GM12878 (cell line): ENCODE measurements at regions of chr1 and their contacts with region 1.

Region 1: DNA sequence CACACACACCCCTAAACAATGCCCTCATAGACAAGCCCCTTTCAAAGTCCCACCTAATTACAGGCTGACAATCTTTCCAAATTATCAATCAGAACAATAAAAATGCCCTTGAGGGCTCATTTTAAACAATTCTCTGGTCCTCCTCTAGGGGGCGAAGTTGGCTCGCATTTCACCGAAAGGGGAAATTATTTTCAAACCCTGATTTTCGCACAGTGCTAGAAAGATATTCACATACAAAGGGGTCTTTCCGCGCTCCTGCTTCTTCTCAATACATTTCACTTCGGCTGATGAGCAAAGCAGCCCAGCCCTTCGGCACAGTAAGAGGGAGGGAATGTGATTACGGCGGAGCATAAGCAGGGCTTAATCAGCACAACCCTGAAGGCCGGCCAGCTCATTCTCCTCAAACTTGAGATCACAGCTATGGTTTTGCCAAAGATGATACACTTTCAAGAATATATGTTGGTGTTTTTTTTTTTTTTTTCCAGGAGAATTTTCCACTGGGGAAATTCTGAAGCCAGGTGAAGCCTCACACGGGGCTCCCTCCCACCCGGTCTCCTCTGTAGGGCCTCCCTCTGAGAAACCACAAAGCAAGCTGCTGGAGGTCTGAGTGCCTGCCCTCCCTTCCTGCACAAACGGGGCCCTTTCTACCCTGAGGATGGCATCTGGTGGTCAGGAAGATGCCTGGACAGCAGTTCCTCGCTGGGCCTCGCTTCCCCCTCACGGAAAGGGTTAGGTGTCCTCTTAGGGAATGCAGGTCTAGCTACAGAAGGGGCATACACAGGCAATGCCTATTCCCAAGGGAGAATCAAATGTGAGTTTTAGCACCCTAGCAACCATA is 66.9 kb downstream of the GNG12 start:
- DNase-seq: no peak
- ATAC-seq: peak; percentile 69
- H3K4me3 ChIP-seq: no peak overlapping the region
- H3K27ac ChIP-seq: no peak overlapping the region
- H3K4me1 ChIP-seq: peaks cover 7% of the 10 kb centered on the region
- H3K27me3 ChIP-seq: peaks cover 0 to 3% of the 10 kb centered on the region in 2 experiments; a peak in 2 of 4 replicates
- CTCF ChIP-seq: peak; percentile 65 to 76 (median 76)
- EP300 ChIP-seq: no peak
- POLR2A ChIP-seq: no peak
- RAD21 ChIP-seq: peak; percentile 85

Region 2: DNA sequence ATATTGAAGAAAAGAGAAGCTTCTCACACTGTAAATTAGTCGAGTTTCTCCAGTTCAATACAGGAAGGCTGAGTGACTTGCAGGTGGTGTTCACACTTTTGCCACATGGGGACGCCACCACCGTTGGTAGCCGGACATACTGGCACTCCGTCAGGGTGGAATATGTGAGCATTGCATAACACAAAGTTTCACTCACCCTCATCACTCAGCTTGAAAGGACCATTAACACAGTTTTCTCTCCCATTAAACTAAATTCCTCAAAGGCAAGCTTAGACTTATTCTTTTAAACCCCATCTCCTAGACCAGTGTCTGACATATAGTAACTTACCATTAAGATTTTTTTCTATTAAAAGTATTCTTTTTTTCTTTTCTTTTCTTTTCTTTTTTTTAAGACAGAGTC is 230.9 kb before region 1 on chr1:
- CTCF ChIA-PET with region 1: interaction called, 213 read pairs
- POLR2A ChIA-PET with region 1: no interaction called
- RAD21 ChIA-PET with region 1: interaction called, 119 read pairs
- SMC1A ChIA-PET with region 1: interaction called, 138 read pairs
- in situ Hi-C with region 1: no loop called
- intact Hi-C with region 1: no loop called
- DNase-seq: peak; percentile 9
- ATAC-seq: peak; percentile 90
- H3K4me3 ChIP-seq: no peak overlapping the region
- H3K27ac ChIP-seq: no peak overlapping the region
- H3K4me1 ChIP-seq: no peaks in the 10 kb centered on the region
- H3K27me3 ChIP-seq: no peaks in the 10 kb centered on the region
- CTCF ChIP-seq: peak; percentile 66 to 77 (median 75)
- EP300 ChIP-seq: no peak
- POLR2A ChIP-seq: no peak
- RAD21 ChIP-seq: peak; percentile 65

Region 3: GRCh38 chr1:67685067-67685557 is 81.2 kb before region 1 on chr1 and contains the start of gene GADD45A:
- CTCF ChIA-PET with region 1: interaction called, 107 read pairs
- POLR2A ChIA-PET with region 1: interaction called, 33 read pairs
- RAD21 ChIA-PET with region 1: interaction called, 225 read pairs
- SMC1A ChIA-PET with region 1: interaction called, 197 read pairs
- in situ Hi-C with region 1: no loop called
- intact Hi-C with region 1: no loop called
- DNase-seq: peak; percentile 97
- ATAC-seq: peak; percentile 88
- H3K4me3 ChIP-seq: peak within 1 kb of the TSS; percentile 81
- H3K27ac ChIP-seq: peak within 1 kb of the TSS; percentile 83
- H3K4me1 ChIP-seq: peaks cover 8% of the 10 kb centered on the region
- H3K27me3 ChIP-seq: peaks cover 0 to 2% of the 10 kb centered on the region in 2 experiments; a peak in 2 of 4 replicates
- CTCF ChIP-seq: no peak
- EP300 ChIP-seq: 0 out of 4 replicates have a peak, but pooled peaks of 1 of the 2 experiments have one; percentile 36
- POLR2A ChIP-seq: peak; percentile 100
- RAD21 ChIP-seq: no peak
- polyA plus RNA-seq, gene GADD45A: 4.7 to 9.3 TPM

Region 4: GRCh38 chr1:67785847-67786753 is 19.7 kb after region 1 on chr1:
- CTCF ChIA-PET with region 1: interaction called, 36 read pairs
- POLR2A ChIA-PET with region 1: interaction called, 15 read pairs
- RAD21 ChIA-PET with region 1: interaction called, 73 read pairs
- SMC1A ChIA-PET with region 1: interaction called, 232 read pairs
- in situ Hi-C with region 1: no loop called
- intact Hi-C with region 1: no loop called
- DNase-seq: no peak
- ATAC-seq: peak; percentile 14; the same call in 2 of the 3 replicates
- H3K4me3 ChIP-seq: no peak overlapping the region
- H3K27ac ChIP-seq: no peak overlapping the region
- H3K4me1 ChIP-seq: no peaks in the 10 kb centered on the region
- H3K27me3 ChIP-seq: no peaks in the 10 kb centered on the region
- CTCF ChIP-seq: no peak
- EP300 ChIP-seq: no peak
- POLR2A ChIP-seq: no peak
- RAD21 ChIP-seq: no peak

Region 5: GRCh38 chr1:67814121-67814772 is 47.9 kb after region 1 on chr1:
- CTCF ChIA-PET with region 1: interaction called, 104 read pairs
- POLR2A ChIA-PET with region 1: interaction called, 35 read pairs
- RAD21 ChIA-PET with region 1: interaction called, 232 read pairs
- SMC1A ChIA-PET with region 1: interaction called, 1,058 read pairs
- in situ Hi-C with region 1: no loop called
- intact Hi-C with region 1: no loop called
- DNase-seq: no peak
- ATAC-seq: no peak
- H3K4me3 ChIP-seq: no peak overlapping the region
- H3K27ac ChIP-seq: no peak overlapping the region
- H3K4me1 ChIP-seq: no peaks in the 10 kb centered on the region
- H3K27me3 ChIP-seq: no peaks in the 10 kb centered on the region
- CTCF ChIP-seq: no peak
- EP300 ChIP-seq: no peak
- POLR2A ChIP-seq: no peak
- RAD21 ChIP-seq: no peak

Region 6: GRCh38 chr1:67853704-67854103 is 87.3 kb after region 1 on chr1:
- CTCF ChIA-PET with region 1: interaction called, 315 read pairs
- POLR2A ChIA-PET with region 1: interaction called, 3 read pairs
- RAD21 ChIA-PET with region 1: interaction called, 175 read pairs
- SMC1A ChIA-PET with region 1: interaction called, 1,058 read pairs
- in situ Hi-C with region 1: no loop called
- intact Hi-C with region 1: loop called (anchors 2 kb)
- DNase-seq: no peak
- ATAC-seq: peak; percentile 82
- H3K4me3 ChIP-seq: no peak overlapping the region
- H3K27ac ChIP-seq: no peak overlapping the region
- H3K4me1 ChIP-seq: no peaks in the 10 kb centered on the region
- H3K27me3 ChIP-seq: no peaks in the 10 kb centered on the region
- CTCF ChIP-seq: peak; percentile 51 to 72 (median 52)
- EP300 ChIP-seq: no peak
- POLR2A ChIP-seq: no peak
- RAD21 ChIP-seq: peak; percentile 41

Region 7: GRCh38 chr1:67874501-67875111 is 108.2 kb after region 1 on chr1:
- CTCF ChIA-PET with region 1: no interaction called
- POLR2A ChIA-PET with region 1: no interaction called
- RAD21 ChIA-PET with region 1: no interaction called
- SMC1A ChIA-PET with region 1: no interaction called
- in situ Hi-C with region 1: no loop called
- intact Hi-C with region 1: no loop called
- DNase-seq: no peak
- ATAC-seq: no peak
- H3K4me3 ChIP-seq: no peak overlapping the region
- H3K27ac ChIP-seq: no peak overlapping the region
- H3K4me1 ChIP-seq: no peaks in the 10 kb centered on the region
- H3K27me3 ChIP-seq: no peaks in the 10 kb centered on the region
- CTCF ChIP-seq: no peak
- EP300 ChIP-seq: no peak
- POLR2A ChIP-seq: no peak
- RAD21 ChIP-seq: no peak

Region 8: DNA sequence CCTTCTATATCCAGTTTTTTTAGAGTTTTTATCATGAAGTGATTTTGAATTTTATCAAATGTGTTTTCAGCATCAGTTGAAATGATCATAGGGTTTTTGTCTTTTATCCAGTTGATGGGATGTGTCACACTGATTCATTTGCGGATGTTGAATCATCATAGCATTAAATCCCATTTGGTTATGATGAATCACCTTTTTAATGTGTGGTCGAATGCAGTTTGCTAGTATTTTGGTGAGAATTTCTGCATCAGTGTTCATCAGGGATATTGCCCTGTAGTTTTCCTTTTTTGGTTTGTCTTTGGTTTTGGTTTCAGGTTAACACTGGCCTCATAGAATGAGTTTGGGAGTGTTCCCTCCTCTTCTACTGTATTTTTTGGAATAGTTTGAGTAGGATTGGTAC is 203.7 kb after region 1 on chr1:
- CTCF ChIA-PET with region 1: no interaction called
- POLR2A ChIA-PET with region 1: no interaction called
- RAD21 ChIA-PET with region 1: no interaction called
- SMC1A ChIA-PET with region 1: no interaction called
- in situ Hi-C with region 1: no loop called
- intact Hi-C with region 1: no loop called
- DNase-seq: no peak
- ATAC-seq: no peak
- H3K4me3 ChIP-seq: no peak overlapping the region
- H3K27ac ChIP-seq: no peak overlapping the region
- H3K4me1 ChIP-seq: no peaks in the 10 kb centered on the region
- H3K27me3 ChIP-seq: no peaks in the 10 kb centered on the region
- CTCF ChIP-seq: no peak
- EP300 ChIP-seq: no peak
- POLR2A ChIP-seq: no peak
- RAD21 ChIP-seq: no peak

Region 9: DNA sequence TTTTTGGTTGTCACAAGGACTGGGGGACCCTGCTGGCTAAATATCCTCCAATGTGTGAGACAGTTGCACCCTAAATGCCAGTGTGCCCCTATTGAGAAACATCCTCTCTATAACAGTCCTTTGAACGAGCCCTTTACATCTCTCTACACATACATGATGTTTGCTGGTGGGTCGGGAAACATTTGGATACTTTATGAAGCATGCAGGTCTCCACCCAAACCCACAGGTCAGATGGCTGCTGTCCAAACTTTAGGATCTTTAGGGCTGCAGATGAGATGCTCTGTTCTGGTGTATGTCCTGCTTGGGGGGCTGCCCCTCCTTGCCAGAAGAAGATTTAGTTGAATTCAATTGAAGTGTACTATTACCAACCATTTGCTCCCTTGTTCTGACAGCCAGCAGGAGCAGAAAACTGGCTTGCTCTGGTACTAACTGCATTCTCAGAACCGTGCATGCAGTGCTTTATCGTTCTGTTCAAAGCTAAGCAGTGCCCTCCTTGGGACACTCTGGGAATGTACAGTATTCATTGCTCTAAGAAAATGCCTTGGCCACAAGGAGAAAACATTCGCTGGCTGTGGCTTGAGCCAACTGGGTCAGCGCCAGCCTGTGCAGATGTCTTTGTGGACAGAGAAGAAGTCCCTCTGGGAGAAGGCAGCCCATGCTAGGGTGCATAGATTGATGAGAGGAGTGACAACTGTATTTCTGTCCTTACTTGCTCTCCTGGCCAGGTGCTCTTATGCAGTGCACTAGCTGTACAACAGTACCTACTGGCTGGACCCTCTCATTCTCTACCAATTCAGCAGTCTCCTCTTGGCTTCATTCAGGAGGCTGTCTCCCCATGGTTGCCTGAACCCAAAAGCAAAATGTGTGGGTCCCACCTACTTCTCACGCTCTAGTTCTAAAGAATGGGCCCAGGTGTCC is 345.4 kb after region 1 on chr1:
- CTCF ChIA-PET with region 1: interaction called, 64 read pairs
- POLR2A ChIA-PET with region 1: interaction called, 6 read pairs
- RAD21 ChIA-PET with region 1: interaction called, 26 read pairs
- SMC1A ChIA-PET with region 1: interaction called, 56 read pairs
- in situ Hi-C with region 1: no loop called
- intact Hi-C with region 1: loop called (anchors 5 kb)
- DNase-seq: no peak
- ATAC-seq: peak; percentile 75
- H3K4me3 ChIP-seq: no peak overlapping the region
- H3K27ac ChIP-seq: no peak overlapping the region
- H3K4me1 ChIP-seq: no peaks in the 10 kb centered on the region
- H3K27me3 ChIP-seq: no peaks in the 10 kb centered on the region; a peak in 1 of 4 replicates
- CTCF ChIP-seq: peak in 1 of 3 experiments; percentile 31; a peak in 2 of 6 replicates
- EP300 ChIP-seq: no peak
- POLR2A ChIP-seq: no peak
- RAD21 ChIP-seq: peak; percentile 25; the same call in 1 of the 2 replicates